Natural killer cell (primary cell): ENCODE measurements at regions of chr18 and their contacts with region 1.

Region 1: DNA sequence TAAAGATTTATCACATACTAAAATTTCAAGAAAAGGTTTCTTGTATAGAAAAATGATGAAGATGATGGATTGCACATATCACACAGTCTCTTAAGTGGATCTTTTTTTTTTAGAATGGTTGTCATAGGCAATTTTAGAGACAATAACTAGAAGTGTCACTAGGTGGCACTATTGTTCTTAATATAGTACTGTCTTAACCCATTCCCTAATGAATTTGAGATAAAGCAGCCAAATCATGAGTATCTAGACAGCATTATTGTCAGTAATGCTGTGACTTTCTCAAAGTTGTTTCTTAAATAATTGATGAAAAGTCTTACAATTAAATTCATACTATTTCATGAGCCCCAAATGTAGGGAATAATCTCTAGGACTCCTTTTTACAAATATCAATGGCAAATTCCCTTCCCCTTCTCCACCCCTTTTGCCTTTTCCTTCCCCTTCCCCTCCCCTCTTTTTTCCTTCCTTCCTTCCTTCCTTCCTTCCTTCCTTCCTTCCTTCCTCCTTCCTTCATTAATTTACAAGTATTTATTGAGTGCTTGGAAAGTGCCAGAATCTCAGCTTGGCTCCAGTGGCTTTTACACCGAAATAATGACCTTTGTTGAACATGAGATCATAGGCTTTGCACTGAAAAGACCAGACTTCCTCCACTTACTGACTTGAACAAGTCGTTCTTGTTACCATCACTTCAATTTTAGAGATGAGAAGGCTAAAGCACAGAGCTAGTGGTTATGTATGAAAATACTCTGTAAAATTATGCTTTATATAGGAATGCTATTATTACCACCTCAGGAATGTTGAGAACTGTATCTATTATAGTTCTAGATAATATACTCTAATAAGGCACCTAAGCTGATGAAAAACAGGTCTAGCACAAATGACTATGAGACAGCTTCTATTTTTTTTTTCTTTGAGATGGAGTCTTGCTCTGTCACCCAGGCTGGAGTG is 19.8 kb downstream of the MYL12B start:
- DNase-seq: peak in 1 of 2 donors; percentile 85
- ATAC-seq: peak; percentile 85 to 95 (median 93)
- H3K4me3 ChIP-seq: no peak overlapping the region
- H3K4me3 Mint-ChIP-seq: no peak overlapping the region
- H3K27ac ChIP-seq: no peak overlapping the region
- H3K27ac Mint-ChIP-seq: no peak overlapping the region
- H3K4me1 ChIP-seq: peaks cover 5% of the 10 kb centered on the region
- H3K4me1 Mint-ChIP-seq: peaks cover 6 to 12% of the 10 kb centered on the region in 2 donors
- H3K27me3 ChIP-seq: no peaks in the 10 kb centered on the region
- H3K27me3 Mint-ChIP-seq: no peaks in the 10 kb centered on the region
- CTCF ChIP-seq: peak; percentile 84

Region 2: DNA sequence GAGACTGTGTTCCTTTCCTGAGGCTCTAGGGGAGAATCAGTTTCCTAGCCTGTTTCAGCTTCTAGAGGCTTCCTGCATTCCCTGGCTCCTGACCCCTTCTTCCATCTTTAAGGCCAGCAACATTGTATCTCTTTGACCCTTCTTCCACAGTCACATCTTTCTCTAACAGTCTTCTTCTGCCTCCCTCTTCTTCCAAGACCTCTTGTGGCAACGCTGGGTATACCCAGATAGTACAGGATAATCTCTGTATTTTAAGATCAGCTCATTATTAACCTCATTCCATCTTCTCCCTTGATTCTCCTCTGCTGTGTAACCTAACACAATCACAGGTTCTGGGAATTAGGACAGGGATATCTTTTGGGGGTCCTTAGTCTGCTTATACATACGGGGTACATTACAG is 43.0 kb before region 1 on chr18:
- intact Hi-C with region 1: no loop called
- DNase-seq: no peak
- ATAC-seq: no peak
- H3K4me3 ChIP-seq: no peak overlapping the region
- H3K4me3 Mint-ChIP-seq: no peak overlapping the region
- H3K27ac ChIP-seq: no peak overlapping the region
- H3K27ac Mint-ChIP-seq: no peak overlapping the region
- H3K4me1 ChIP-seq: no peaks in the 10 kb centered on the region
- H3K4me1 Mint-ChIP-seq: peaks cover 0 to 9% of the 10 kb centered on the region in 2 donors
- H3K27me3 ChIP-seq: no peaks in the 10 kb centered on the region
- H3K27me3 Mint-ChIP-seq: no peaks in the 10 kb centered on the region
- CTCF ChIP-seq: no peak

Region 3: GRCh38 chr18:3454365-3455089 is 172.8 kb after region 1 on chr18:
- intact Hi-C with region 1: loop called (anchors 1 kb)
- DNase-seq: peak in 1 of 2 donors; percentile 78
- ATAC-seq: peak in 2 of 3 donors; percentile 22 to 30
- H3K4me3 ChIP-seq: peak overlapping the region; percentile 38
- H3K4me3 Mint-ChIP-seq: peak overlapping the region; percentile 97
- H3K27ac ChIP-seq: peak overlapping the region; percentile 97
- H3K27ac Mint-ChIP-seq: peak overlapping the region; percentile 99 to 100
- H3K4me1 ChIP-seq: peaks cover 42% of the 10 kb centered on the region
- H3K4me1 Mint-ChIP-seq: peaks cover 44 to 49% of the 10 kb centered on the region in 2 donors
- H3K27me3 ChIP-seq: no peaks in the 10 kb centered on the region
- H3K27me3 Mint-ChIP-seq: no peaks in the 10 kb centered on the region
- CTCF ChIP-seq: peak; percentile 73

Region 4: DNA sequence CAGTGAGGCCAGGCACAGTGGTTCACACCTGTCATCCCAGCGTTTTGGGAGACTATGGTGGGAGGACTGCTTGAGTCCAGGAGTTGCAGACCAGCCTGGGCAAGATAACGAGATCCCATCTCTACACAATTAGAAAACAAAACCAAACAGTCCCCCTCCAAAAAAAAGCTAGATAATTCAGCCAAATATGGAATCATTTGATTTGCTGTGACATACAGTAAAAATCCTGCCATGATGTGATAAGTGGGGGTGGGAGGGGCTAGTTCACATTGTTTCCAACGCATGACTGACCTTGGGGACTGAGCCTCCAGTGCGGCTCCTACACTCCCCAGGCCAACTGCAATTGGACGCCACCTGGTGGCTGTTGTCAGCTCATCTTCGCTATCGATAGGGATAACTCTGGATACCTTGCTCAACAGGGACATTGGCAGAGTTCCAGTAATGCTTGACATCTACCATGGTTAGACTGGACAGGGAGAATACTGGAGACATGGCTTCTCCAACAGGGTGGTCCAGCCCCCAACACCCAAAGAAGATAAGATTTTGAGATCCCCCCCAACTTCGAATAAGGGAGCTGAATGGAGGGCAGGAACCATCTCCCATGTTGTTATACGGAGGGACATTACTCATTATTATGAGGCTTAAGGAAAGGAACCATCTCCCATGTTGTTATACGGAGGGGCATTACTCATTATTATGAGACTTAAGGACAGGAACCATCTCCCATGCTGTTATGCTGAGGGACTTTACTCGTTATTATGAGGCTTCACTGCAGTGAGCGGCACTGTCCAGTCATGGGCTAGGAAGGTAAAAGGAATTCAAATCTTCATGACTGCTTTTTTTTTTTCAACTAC is 304.2 kb after region 1 on chr18:
- intact Hi-C with region 1: loop called (anchors 1 kb)
- DNase-seq: peak; percentile 62 to 86
- ATAC-seq: peak; percentile 85 to 98 (median 98)
- H3K4me3 ChIP-seq: no peak overlapping the region
- H3K4me3 Mint-ChIP-seq: no peak overlapping the region
- H3K27ac ChIP-seq: peak overlapping the region; percentile 33
- H3K27ac Mint-ChIP-seq: no peak overlapping the region
- H3K4me1 ChIP-seq: no peaks in the 10 kb centered on the region
- H3K4me1 Mint-ChIP-seq: peaks cover 0 to 7% of the 10 kb centered on the region in 2 donors
- H3K27me3 ChIP-seq: no peaks in the 10 kb centered on the region
- H3K27me3 Mint-ChIP-seq: peaks cover 0 to 3% of the 10 kb centered on the region in 2 donors
- CTCF ChIP-seq: peak; percentile 63

Region 5: GRCh38 chr18:3665780-3666525 is 384.2 kb after region 1 on chr18:
- intact Hi-C with region 1: loop called (anchors 1 kb)
- DNase-seq: peak; percentile 68 to 88
- ATAC-seq: peak; percentile 81 to 94 (median 88)
- H3K4me3 ChIP-seq: no peak overlapping the region
- H3K4me3 Mint-ChIP-seq: peak overlapping the region; percentile 49
- H3K27ac ChIP-seq: no peak overlapping the region
- H3K27ac Mint-ChIP-seq: no peak overlapping the region
- H3K4me1 ChIP-seq: peaks cover 8% of the 10 kb centered on the region
- H3K4me1 Mint-ChIP-seq: peaks cover 3 to 5% of the 10 kb centered on the region in 2 donors
- H3K27me3 ChIP-seq: peaks cover 2% of the 10 kb centered on the region
- H3K27me3 Mint-ChIP-seq: peaks cover 0 to 8% of the 10 kb centered on the region in 2 donors
- CTCF ChIP-seq: peak; percentile 96

Region 6: DNA sequence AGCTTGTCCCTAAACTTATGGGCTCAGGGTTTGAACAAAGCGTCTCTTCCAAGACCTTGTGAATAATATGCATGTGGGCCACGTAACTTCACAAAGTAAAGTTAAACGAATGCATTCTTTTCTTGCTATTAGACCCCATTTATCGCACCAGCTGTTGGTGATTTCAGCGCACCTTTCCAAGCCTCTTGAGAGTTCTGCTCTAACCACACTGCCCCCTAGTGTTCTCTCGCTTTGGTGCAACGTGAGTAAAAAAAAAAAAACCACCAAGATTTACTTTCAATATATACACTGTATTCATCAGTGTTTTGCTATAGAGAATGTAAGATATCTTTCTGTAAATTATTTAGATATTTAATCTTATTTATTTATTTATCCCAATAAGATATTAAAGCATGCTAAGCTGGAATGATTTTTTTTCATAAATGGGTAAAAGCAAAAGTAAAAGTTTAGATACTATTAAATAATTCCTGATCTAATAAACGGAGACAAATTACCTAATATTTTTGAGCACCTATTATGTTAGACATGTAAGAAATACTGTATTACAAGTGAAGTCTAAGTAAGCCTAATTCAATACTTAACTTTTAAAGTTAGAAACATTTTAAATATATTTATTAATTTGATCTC is 713.9 kb after region 1 on chr18:
- intact Hi-C with region 1: loop called (anchors 10 kb)
- DNase-seq: peak in 1 of 2 donors; percentile 79
- ATAC-seq: peak; percentile 57 to 86 (median 66)
- H3K4me3 ChIP-seq: no peak overlapping the region
- H3K4me3 Mint-ChIP-seq: no peak overlapping the region
- H3K27ac ChIP-seq: no peak overlapping the region
- H3K27ac Mint-ChIP-seq: no peak overlapping the region
- H3K4me1 ChIP-seq: no peaks in the 10 kb centered on the region
- H3K4me1 Mint-ChIP-seq: no peaks in the 10 kb centered on the region
- H3K27me3 ChIP-seq: no peaks in the 10 kb centered on the region
- H3K27me3 Mint-ChIP-seq: no peaks in the 10 kb centered on the region
- CTCF ChIP-seq: peak; percentile 73